ENCODE measurements at regions of chr5 and their contacts with region 1.

Region 1: DNA sequence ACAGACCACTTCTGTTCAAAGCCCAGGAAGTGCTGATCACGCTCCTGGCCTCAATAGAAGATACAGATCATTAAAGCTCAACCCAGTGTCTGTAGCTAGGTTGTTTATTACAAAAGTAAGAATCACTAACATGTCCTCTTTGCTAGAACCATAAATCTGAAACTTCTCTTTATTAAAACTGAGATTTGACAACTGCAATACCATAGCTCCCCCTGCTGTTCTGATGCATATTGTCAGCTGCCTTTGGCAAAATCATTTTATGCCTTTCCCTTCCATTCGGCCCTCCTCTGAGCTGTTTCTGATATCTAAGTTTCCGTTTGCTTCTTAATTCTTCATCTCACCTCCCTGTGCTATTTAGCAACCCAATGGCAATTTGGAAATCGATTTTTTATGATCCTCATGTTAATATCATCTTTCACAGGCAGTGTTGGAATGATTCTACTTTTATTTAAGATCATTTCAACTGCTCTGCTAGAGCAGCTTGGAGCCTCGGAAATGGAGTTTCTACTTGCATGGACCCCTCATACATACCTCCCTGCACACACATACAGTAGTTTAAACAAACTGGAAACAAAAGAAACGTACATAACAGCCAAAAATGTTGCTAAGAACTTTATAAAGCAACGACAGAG is 998.8 kb downstream of the MAT2B start:
- DNase-seq: peak; percentile 68
- ATAC-seq: peak; percentile 70
- H3K4me3 ChIP-seq: peak overlapping the region; percentile 38; the same call in 1 of the 2 replicates
- H3K27ac ChIP-seq: no peak overlapping the region
- H3K4me1 ChIP-seq: no peaks in the 10 kb centered on the region
- H3K27me3 ChIP-seq: no peaks in the 10 kb centered on the region
- CTCF ChIP-seq: peak; percentile 86

Region 2: DNA sequence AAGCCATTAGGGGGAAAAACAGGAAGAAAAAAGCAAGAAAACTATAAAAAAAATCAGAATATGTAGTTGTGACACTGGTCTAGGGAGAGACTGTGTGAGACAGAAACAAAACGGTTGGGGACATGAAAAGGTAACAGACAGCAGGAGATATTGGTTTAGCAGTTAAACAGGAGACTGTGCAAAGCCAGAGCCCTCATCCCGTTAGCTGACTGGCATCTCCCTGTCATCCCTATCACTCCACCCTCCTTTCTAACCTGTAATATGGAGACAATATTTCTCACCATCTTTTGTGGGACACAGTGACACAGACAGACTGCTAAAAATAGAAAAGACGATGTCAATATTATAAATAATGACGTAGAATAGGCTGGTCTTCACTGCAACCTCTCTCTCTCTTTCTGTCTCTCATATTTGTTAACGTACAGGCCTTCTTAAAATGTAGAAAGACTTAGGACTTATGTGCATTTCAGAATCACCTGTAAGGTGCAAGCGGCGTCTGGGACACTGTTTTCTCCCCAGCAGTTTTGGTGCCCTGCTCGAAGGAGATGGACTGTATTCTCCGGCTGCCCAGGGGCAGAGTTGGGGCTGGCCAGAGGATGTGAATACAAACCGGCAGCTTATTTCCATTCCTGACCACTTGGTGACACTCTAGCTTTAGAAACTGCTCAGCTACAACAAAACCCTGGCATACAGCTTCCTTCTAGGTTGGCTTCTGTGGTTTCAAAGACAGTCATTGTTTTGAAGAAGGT is 808.3 kb before region 1 on chr5:
- CTCF ChIA-PET with region 1: interaction called, 3 read pairs
- POLR2A ChIA-PET with region 1: no interaction called
- intact Hi-C with region 1: loop called (anchors 1 kb)
- DNase-seq: peak; percentile 64
- ATAC-seq: peak; percentile 95
- H3K4me3 ChIP-seq: no peak overlapping the region
- H3K27ac ChIP-seq: no peak overlapping the region
- H3K4me1 ChIP-seq: no peaks in the 10 kb centered on the region
- H3K27me3 ChIP-seq: 0 out of 2 replicates have a peak, but pooled peaks cover 7% of the 10 kb centered on the region
- CTCF ChIP-seq: peak; percentile 74

Region 3: GRCh38 chr5:164048359-164048926 is 455.8 kb before region 1 on chr5:
- CTCF ChIA-PET with region 1: no interaction called
- POLR2A ChIA-PET with region 1: no interaction called
- intact Hi-C with region 1: loop called (anchors 1 kb)
- DNase-seq: peak; percentile 23
- ATAC-seq: no peak
- H3K4me3 ChIP-seq: no peak overlapping the region
- H3K27ac ChIP-seq: no peak overlapping the region
- H3K4me1 ChIP-seq: no peaks in the 10 kb centered on the region
- H3K27me3 ChIP-seq: no peaks in the 10 kb centered on the region
- CTCF ChIP-seq: peak; percentile 45; the same call in 1 of the 2 replicates

Region 4: GRCh38 chr5:164672931-164673694 is 168.9 kb after region 1 on chr5:
- CTCF ChIA-PET with region 1: interaction called, 4 read pairs
- POLR2A ChIA-PET with region 1: no interaction called
- intact Hi-C with region 1: loop called (anchors 5 kb)
- DNase-seq: peak; percentile 13
- ATAC-seq: peak; percentile 51
- H3K4me3 ChIP-seq: no peak overlapping the region
- H3K27ac ChIP-seq: no peak overlapping the region
- H3K4me1 ChIP-seq: no peaks in the 10 kb centered on the region
- H3K27me3 ChIP-seq: no peaks in the 10 kb centered on the region
- CTCF ChIP-seq: no peak; the same call in 1 of the 2 replicates